IMR-90 (cell line): ENCODE measurements at regions of chr10 and their contacts with region 1.

Region 1: DNA sequence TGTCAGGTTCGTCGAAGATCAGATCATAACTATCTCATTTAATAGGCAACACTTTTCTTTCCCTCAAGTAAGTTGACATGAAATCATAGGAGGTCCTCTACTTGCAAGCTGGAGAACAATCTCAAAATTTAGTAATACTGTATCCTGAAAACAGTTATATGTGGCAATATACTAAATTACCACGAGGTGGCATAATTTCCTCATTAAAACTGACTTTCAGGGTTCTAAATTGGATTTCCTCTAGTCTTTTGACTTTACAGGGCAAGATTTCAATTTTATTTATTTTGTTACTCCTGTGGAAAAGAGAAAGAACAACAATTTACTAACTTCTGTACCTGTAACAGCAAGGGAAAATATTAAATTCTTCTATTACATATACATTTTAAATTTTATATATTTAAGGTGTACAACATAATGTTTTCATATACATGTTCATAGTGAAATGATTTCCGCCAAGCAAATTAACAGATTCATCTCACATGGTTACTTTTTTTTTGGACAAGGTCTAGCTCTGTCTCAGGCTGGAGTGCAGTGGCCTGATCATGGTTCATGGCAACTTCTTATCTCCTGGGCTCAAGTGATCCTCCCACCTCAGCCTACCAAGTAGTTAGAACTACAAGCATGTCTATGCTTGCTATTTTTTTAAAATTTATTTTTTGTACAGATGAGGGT is 53.4 kb upstream of the CYP2C18 start:
- DNase-seq: peak; percentile 12
- ATAC-seq: no peak
- H3K4me3 ChIP-seq: no peak overlapping the region
- H3K27ac ChIP-seq: no peak overlapping the region
- H3K4me1 ChIP-seq: no peaks in the 10 kb centered on the region
- H3K27me3 ChIP-seq: no peaks in the 10 kb centered on the region
- CTCF ChIP-seq: peak; percentile 59
- POLR2A ChIP-seq: no peak
- RAD21 ChIP-seq: peak; percentile 47

Region 2: GRCh38 chr10:94602729-94603515 is 27.2 kb before region 1 on chr10:
- CTCF ChIA-PET with region 1: no interaction called
- POLR2A ChIA-PET with region 1: no interaction called
- dilution Hi-C with region 1: no loop called
- in situ Hi-C with region 1: no loop called
- intact Hi-C with region 1: no loop called
- DNase-seq: no peak
- ATAC-seq: no peak
- H3K4me3 ChIP-seq: no peak overlapping the region
- H3K27ac ChIP-seq: no peak overlapping the region
- H3K4me1 ChIP-seq: no peaks in the 10 kb centered on the region
- H3K27me3 ChIP-seq: no peaks in the 10 kb centered on the region
- CTCF ChIP-seq: no peak
- POLR2A ChIP-seq: no peak
- RAD21 ChIP-seq: no peak

Region 3: DNA sequence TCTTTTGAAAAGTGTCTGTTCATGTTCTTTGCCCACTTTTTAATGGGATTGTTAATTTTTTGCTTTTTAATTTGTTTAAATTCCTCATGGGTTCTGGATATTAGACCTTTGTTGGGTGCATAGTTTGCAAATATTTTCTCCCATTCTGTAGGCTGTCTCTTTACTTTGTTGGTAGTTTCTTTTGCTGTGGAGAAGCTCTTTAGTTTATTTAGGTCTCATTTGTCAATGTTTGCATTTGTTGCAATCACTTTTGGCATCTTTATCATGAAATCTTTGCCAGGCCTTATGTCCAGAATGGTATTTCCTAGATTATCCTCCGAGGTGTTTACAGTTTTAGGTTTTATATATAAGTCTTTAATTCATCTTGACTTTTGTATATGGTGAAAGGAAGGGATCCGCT is 108.4 kb after region 1 on chr10:
- CTCF ChIA-PET with region 1: no interaction called
- POLR2A ChIA-PET with region 1: no interaction called
- dilution Hi-C with region 1: no loop called
- in situ Hi-C with region 1: no loop called
- intact Hi-C with region 1: no loop called
- DNase-seq: no peak
- ATAC-seq: no peak
- H3K4me3 ChIP-seq: no peak overlapping the region
- H3K27ac ChIP-seq: no peak overlapping the region
- H3K4me1 ChIP-seq: no peaks in the 10 kb centered on the region
- H3K27me3 ChIP-seq: no peaks in the 10 kb centered on the region
- CTCF ChIP-seq: no peak
- POLR2A ChIP-seq: no peak
- RAD21 ChIP-seq: no peak

Region 4: GRCh38 chr10:95183271-95184230 is 553.4 kb after region 1 on chr10:
- CTCF ChIA-PET with region 1: no interaction called
- POLR2A ChIA-PET with region 1: no interaction called
- dilution Hi-C with region 1: no loop called
- in situ Hi-C with region 1: no loop called
- intact Hi-C with region 1: loop called (anchors 2 kb)
- DNase-seq: peak; percentile 71
- ATAC-seq: peak; percentile 98
- H3K4me3 ChIP-seq: peak overlapping the region; percentile 65
- H3K27ac ChIP-seq: peak overlapping the region; percentile 48; the same call in 1 of the 2 replicates
- H3K4me1 ChIP-seq: no peaks in the 10 kb centered on the region
- H3K27me3 ChIP-seq: peaks cover 2% of the 10 kb centered on the region
- CTCF ChIP-seq: peak; percentile 94
- POLR2A ChIP-seq: no peak
- RAD21 ChIP-seq: peak; percentile 76